Posterior cingulate gyrus (tissue), 11 donors: ENCODE measurements at regions of chr18 and their contacts with region 1.

Region 1: DNA sequence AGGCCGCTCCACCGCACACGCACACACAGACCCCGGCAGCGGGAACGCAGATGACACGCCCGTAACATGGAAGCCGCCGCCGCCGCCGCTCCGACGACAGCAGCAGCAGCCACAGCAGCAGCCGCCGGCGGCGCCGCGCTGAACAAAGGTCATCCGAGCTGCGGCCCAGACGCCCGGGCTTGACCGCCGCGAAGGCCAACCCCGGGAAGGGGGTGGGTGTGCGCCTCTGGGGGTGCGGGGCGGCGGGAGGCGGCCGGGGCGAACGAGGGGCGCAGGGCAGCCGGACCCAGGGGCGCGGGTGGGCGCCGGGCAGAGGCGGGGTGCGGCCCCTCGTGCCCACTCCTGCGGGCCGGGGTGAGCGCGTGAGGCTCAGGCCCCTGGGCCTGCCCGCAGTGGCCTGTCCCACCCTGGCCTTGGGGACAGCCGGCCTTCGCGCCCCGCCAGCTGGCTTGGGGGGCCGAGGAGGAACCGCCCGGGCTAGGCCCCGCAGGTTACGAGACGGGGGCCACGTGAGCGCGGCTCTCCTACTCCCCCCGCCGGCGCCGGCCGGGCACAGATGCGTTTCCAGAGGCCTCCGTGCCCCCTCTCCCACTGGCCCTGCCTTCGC is 1.0 kb upstream of the ZNF532 start:
- DNase-seq: peak in 8 of 10 donors; percentile 28 to 92 (median 60)

Region 2: GRCh38 chr18:58781627-58782194 is 81.9 kb before region 1 on chr18:
- intact Hi-C with region 1: loop called (anchors 5 kb)
- DNase-seq: peak; percentile 74 to 97 (median 86)

Region 3: GRCh38 chr18:59056706-59057492 is 193.3 kb after region 1 on chr18:
- intact Hi-C with region 1: loop called (anchors 5 kb)
- DNase-seq: peak; percentile 61 to 97 (median 88)